Dendritic cell treated with granulocyte-macrophage colony-stimulating factor and Interleukin-4, amounts not matched to agents 40 ng/mL and 50 ng/mL, for 4 days (primary cell): ENCODE measurements at regions of chr15 and their contacts with region 1.

Region 1: GRCh38 chr15:87764461-87765240 is 491.9 kb downstream of the NTRK3 start:
- H3K4me3 Mint-ChIP-seq: no peak overlapping the region
- H3K27ac Mint-ChIP-seq: no peak overlapping the region
- H3K4me1 Mint-ChIP-seq: peaks cover 31% of the 10 kb centered on the region
- H3K27me3 Mint-ChIP-seq: peaks cover 7% of the 10 kb centered on the region

Region 2: GRCh38 chr15:87881026-87881425 is 116.4 kb after region 1 on chr15:
- intact Hi-C with region 1: loop called (anchors 5 kb)
- H3K4me3 Mint-ChIP-seq: no peak overlapping the region
- H3K27ac Mint-ChIP-seq: no peak overlapping the region
- H3K4me1 Mint-ChIP-seq: peaks cover 36% of the 10 kb centered on the region
- H3K27me3 Mint-ChIP-seq: peaks cover 21% of the 10 kb centered on the region